Lower lobe of right lung (tissue), 2 donors: ENCODE measurements at regions of chrX and their contacts with region 1.

Region 1: GRCh38 chrX:55335296-55335695 is 70.6 kb upstream of the PAGE3 start:
- DNase-seq: no peak
- ATAC-seq: no peak
- H3K4me3 ChIP-seq: no peak overlapping the region
- H3K27ac ChIP-seq: no peak overlapping the region
- H3K4me1 ChIP-seq: no peaks in the 10 kb centered on the region
- H3K27me3 ChIP-seq: no peaks in the 10 kb centered on the region
- CTCF ChIP-seq: no peak

Region 2: GRCh38 chrX:55135171-55135570 is 200.1 kb before region 1 on chrX:
- intact Hi-C with region 1: no loop called
- DNase-seq: no peak
- ATAC-seq: peak in 1 of 2 donors; percentile 51
- H3K4me3 ChIP-seq: no peak overlapping the region
- H3K27ac ChIP-seq: no peak overlapping the region
- H3K4me1 ChIP-seq: no peaks in the 10 kb centered on the region
- H3K27me3 ChIP-seq: no peaks in the 10 kb centered on the region
- CTCF ChIP-seq: peak; percentile 58

Region 3: GRCh38 chrX:55279832-55280231 is 55.5 kb before region 1 on chrX:
- intact Hi-C with region 1: loop called (anchors 10 kb)
- DNase-seq: no peak
- ATAC-seq: no peak
- H3K4me3 ChIP-seq: no peak overlapping the region
- H3K27ac ChIP-seq: no peak overlapping the region
- H3K4me1 ChIP-seq: no peaks in the 10 kb centered on the region
- H3K27me3 ChIP-seq: no peaks in the 10 kb centered on the region
- CTCF ChIP-seq: no peak